ENCODE measurements at regions of chr7 and their contacts with region 1.

Region 1: DNA sequence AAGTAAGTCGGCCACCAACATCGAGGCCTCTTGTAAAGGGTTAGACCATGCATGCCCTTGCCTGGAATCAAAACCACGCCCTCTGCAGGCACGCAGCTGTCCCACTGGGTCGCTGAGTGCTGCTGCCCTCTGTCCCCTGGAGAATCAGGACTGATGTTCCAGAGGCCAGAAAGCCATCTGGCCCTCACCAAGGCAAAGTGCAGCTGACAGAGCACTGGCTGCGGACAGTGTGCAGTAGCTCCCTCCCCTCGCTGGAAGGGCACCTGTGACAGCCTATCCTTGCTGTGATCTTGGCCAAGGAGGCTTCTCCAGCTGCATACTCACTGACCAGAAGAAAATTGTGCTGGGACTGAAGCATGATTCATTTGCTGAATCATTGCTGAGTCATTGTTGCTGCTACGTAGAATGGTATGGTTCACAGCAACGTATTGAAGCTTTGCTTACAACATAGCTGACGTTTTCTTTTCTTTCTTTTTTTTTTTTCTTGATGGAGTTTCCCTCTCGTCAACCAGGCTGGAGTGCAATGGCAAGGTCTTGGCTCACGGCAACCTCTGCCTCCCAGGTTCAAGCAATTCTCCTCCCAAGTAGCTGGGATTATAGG is 30.4 kb downstream of the DDC start:
- DNase-seq: peak; percentile 43 to 77
- H3K4me3 ChIP-seq: no peak overlapping the region
- H3K4me3 Mint-ChIP-seq: no peak overlapping the region
- H3K27ac Mint-ChIP-seq: peak overlapping the region; percentile 28
- H3K4me1 ChIP-seq: peaks cover 61% of the 10 kb centered on the region
- H3K4me1 Mint-ChIP-seq: peaks cover 32% of the 10 kb centered on the region
- H3K27me3 ChIP-seq: no peaks in the 10 kb centered on the region
- H3K27me3 Mint-ChIP-seq: no peaks in the 10 kb centered on the region
- CTCF ChIP-seq: no peak

Region 2: GRCh38 chr7:50475340-50475739 is 59.5 kb before region 1 on chr7:
- CTCF ChIA-PET with region 1: no interaction called
- POLR2A ChIA-PET with region 1: no interaction called
- intact Hi-C with region 1: loop called (anchors 2 kb)
- DNase-seq: no peak
- H3K4me3 ChIP-seq: no peak overlapping the region
- H3K4me3 Mint-ChIP-seq: no peak overlapping the region
- H3K27ac Mint-ChIP-seq: no peak overlapping the region
- H3K4me1 ChIP-seq: peaks cover 19% of the 10 kb centered on the region
- H3K4me1 Mint-ChIP-seq: peaks cover 24% of the 10 kb centered on the region
- H3K27me3 ChIP-seq: no peaks in the 10 kb centered on the region
- H3K27me3 Mint-ChIP-seq: no peaks in the 10 kb centered on the region
- CTCF ChIP-seq: no peak

Region 3: DNA sequence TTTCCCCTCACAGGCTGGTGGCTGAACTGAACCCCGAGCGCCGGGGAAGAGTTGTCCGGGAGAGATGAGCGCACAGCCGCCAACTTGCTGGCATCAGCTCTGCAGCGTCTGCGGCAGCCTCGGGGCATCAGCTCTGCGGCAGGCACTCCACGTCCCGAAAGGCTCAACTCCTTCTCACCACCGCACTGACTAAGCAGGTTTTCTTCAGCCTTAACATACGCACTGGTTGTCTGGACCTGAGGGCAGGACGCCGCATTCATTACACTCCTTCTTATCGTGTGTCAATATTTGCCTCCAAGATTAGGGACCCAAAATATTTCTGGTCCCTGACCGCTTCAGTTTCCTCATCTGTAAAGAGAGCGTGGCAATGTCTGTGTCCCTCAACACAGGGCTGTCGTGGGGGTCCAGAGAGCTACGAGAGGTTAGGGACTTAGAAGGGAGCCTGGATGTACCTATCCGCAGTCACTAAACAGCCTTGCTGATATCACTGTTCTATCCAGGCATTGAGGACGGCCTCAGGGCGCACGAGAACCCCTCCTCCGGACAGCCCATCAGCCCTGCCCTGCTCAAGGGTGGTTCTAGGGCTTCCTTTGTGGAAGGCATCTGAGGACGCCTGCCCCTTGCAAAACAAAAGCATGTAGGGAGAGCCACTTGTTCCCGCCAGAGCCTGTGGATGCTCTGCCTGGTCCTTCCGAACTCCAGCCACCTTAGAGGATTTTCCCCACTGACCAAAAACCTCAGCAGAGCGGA is 41.8 kb before region 1 on chr7:
- CTCF ChIA-PET with region 1: no interaction called
- POLR2A ChIA-PET with region 1: no interaction called
- intact Hi-C with region 1: loop called (anchors 2 kb)
- DNase-seq: peak; percentile 56 to 61
- H3K4me3 ChIP-seq: no peak overlapping the region
- H3K4me3 Mint-ChIP-seq: peak overlapping the region; percentile 20
- H3K27ac Mint-ChIP-seq: peak overlapping the region; percentile 60
- H3K4me1 ChIP-seq: peaks cover 16% of the 10 kb centered on the region
- H3K4me1 Mint-ChIP-seq: peaks cover 24% of the 10 kb centered on the region
- H3K27me3 ChIP-seq: no peaks in the 10 kb centered on the region
- H3K27me3 Mint-ChIP-seq: no peaks in the 10 kb centered on the region
- CTCF ChIP-seq: no peak

Region 4: DNA sequence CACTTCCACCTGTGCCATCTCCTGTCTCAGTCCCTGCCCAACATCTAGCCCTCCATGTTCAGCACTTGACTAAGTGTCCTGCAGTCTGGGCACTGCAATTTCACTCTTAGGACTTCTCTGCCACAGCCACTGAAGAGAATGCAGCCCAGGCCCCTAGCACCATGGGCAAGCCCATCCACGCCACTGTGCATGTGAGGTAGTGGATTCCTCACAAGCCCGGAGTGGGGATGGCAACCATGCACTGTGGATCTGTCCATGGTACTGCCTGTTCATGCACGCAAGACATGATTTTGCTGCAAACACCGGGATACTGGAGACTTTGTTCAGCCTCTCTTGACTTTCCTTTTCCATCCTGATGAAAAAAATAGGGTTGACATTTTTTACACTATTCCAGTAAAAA is 18.1 kb after region 1 on chr7:
- CTCF ChIA-PET with region 1: interaction called, 4 read pairs
- POLR2A ChIA-PET with region 1: no interaction called
- intact Hi-C with region 1: loop called (anchors 1 kb)
- DNase-seq: peak; percentile 59 to 63
- H3K4me3 ChIP-seq: no peak overlapping the region
- H3K4me3 Mint-ChIP-seq: peak overlapping the region; percentile 18
- H3K27ac Mint-ChIP-seq: no peak overlapping the region
- H3K4me1 ChIP-seq: peaks cover 61% of the 10 kb centered on the region
- H3K4me1 Mint-ChIP-seq: peaks cover 44% of the 10 kb centered on the region
- H3K27me3 ChIP-seq: no peaks in the 10 kb centered on the region
- H3K27me3 Mint-ChIP-seq: no peaks in the 10 kb centered on the region
- CTCF ChIP-seq: no peak

Region 5: GRCh38 chr7:50560865-50561351 is 26.1 kb after region 1 on chr7:
- CTCF ChIA-PET with region 1: no interaction called
- POLR2A ChIA-PET with region 1: interaction called, 8 read pairs
- intact Hi-C with region 1: loop called (anchors 1 kb)
- DNase-seq: no peak
- H3K4me3 ChIP-seq: no peak overlapping the region
- H3K4me3 Mint-ChIP-seq: no peak overlapping the region
- H3K27ac Mint-ChIP-seq: no peak overlapping the region
- H3K4me1 ChIP-seq: peaks cover 46% of the 10 kb centered on the region
- H3K4me1 Mint-ChIP-seq: peaks cover 56% of the 10 kb centered on the region
- H3K27me3 ChIP-seq: no peaks in the 10 kb centered on the region
- H3K27me3 Mint-ChIP-seq: no peaks in the 10 kb centered on the region
- CTCF ChIP-seq: no peak

Measured in Caco-2 (cell line).